ENCODE measurements at regions of chr17 and their contacts with region 1.

Region 1: GRCh38 chr17:82320956-82321927 is 3.8 kb upstream of the CD7 start:
- DNase-seq: no peak
- ATAC-seq: peak; percentile 57
- H3K4me3 ChIP-seq: peak overlapping the region in 1 of 2 experiments; percentile 24; a peak in 1 of 4 replicates
- H3K27ac ChIP-seq: no peak overlapping the region
- H3K4me1 ChIP-seq: peaks cover 21% of the 10 kb centered on the region
- H3K27me3 ChIP-seq: no peaks in the 10 kb centered on the region
- CTCF ChIP-seq: peak; percentile 99

Region 2: DNA sequence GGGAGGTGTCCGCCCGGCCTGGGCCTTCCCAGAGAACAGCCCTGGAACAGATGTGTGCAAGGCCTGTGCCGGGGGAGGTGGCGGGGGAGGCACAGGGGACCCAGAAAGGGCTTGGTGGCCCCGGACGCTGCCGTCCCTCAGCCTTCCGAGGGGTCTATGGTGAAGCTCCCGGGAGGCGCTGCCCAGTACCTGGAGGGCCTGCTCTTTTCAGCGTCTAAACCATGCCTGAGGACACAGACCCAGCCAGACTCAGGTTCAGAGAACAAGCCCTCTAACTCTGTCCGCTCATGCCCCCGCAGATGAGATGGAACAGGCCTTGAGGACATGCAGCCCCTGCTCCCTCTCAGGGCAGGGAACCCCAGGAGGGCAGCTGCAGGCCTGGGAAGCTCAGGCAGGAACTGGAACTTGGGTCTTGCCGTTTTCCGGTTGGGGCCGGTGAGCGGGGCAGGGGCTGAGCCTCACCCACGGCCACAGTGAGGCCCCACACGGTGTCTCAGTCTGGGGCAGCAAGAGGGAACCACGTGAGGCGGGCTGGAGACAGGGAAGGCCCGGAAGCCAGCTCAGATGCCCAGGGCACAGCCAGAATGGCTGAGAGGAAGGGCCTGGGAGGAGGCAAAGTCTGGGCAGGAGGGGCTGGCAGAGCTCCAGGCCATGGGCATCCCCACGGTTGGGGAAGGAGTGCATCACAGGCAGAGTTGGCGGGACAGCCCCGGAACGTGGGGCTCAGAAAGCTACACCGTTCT is 79.9 kb before region 1 on chr17:
- CTCF ChIA-PET with region 1: no interaction called
- POLR2A ChIA-PET with region 1: no interaction called
- in situ Hi-C with region 1: no loop called
- intact Hi-C with region 1: loop called (anchors 5 kb)
- DNase-seq: no peak
- ATAC-seq: peak; percentile 28
- H3K4me3 ChIP-seq: no peak overlapping the region
- H3K27ac ChIP-seq: peak overlapping the region; percentile 94
- H3K4me1 ChIP-seq: peaks cover 89% of the 10 kb centered on the region
- H3K27me3 ChIP-seq: no peaks in the 10 kb centered on the region
- CTCF ChIP-seq: no peak

Region 3: GRCh38 chr17:82249896-82250581 is 71.2 kb before region 1 on chr17:
- CTCF ChIA-PET with region 1: interaction called, 15 read pairs
- POLR2A ChIA-PET with region 1: no interaction called
- in situ Hi-C with region 1: no loop called
- intact Hi-C with region 1: no loop called
- DNase-seq: no peak
- ATAC-seq: no peak
- H3K4me3 ChIP-seq: no peak overlapping the region
- H3K27ac ChIP-seq: no peak overlapping the region; the same call in 1 of the 2 replicates
- H3K4me1 ChIP-seq: peaks cover 27% of the 10 kb centered on the region
- H3K27me3 ChIP-seq: no peaks in the 10 kb centered on the region
- CTCF ChIP-seq: no peak

Region 4: GRCh38 chr17:82297714-82298537 is 23.3 kb before region 1 on chr17:
- CTCF ChIA-PET with region 1: interaction called, 11 read pairs
- POLR2A ChIA-PET with region 1: interaction called, 4 read pairs
- in situ Hi-C with region 1: no loop called
- intact Hi-C with region 1: no loop called
- DNase-seq: peak; percentile 71
- ATAC-seq: peak; percentile 72
- H3K4me3 ChIP-seq: peak overlapping the region; percentile 43 to 67
- H3K27ac ChIP-seq: peak overlapping the region; percentile 83
- H3K4me1 ChIP-seq: peaks cover 79% of the 10 kb centered on the region
- H3K27me3 ChIP-seq: no peaks in the 10 kb centered on the region
- CTCF ChIP-seq: no peak